HEK293 (cell line): ENCODE measurements at regions of chr12 and their contacts with region 1.

Region 1: DNA sequence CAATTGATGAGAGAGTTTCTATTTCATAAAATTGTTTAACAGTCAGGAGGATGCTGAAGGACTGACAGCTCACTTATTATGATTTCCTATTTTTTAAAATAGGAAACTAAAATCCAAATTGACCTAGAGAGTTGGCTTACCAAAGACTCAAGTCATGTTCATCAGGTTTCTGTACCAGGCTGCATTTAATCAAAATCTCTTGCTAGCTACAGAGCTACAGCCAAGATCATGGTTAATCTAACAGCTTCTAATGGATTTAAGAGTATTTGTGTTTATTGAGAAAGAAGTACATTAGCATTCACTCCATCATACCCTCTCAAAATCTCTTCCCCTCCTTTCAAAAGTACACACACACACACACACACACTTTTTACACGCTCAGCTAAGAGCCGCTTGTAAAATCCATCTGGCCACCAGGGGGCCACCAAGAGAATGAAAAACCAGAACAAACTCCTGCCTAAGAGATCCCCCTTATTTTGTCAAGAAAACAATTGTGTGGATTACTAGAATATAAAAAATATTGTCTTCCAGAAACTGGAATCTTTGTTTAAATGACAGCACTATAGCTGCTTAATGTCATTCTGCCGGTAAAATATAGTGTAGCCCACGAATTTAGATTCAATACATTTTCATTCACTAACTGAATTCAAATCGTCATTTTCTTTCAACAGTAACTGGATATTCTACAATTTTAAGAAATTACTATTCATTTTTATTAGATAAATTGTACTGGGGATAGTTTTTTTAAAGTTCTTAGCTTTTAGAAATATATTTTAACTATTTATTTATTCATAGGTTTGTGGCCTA is 334.0 kb downstream of the BTG1 start:
- H3K4me3 ChIP-seq: no peak overlapping the region
- H3K27ac ChIP-seq: no peak overlapping the region
- H3K4me1 ChIP-seq: no peaks in the 10 kb centered on the region
- CTCF ChIP-seq: peak; percentile 64

Region 2: GRCh38 chr12:91422801-91423688 is 388.6 kb before region 1 on chr12:
- CTCF ChIA-PET with region 1: no interaction called
- POLR2A ChIA-PET with region 1: no interaction called
- H3K4me3 ChIP-seq: no peak overlapping the region
- H3K27ac ChIP-seq: no peak overlapping the region
- H3K4me1 ChIP-seq: 0 out of 2 replicates have a peak, but pooled peaks cover 2% of the 10 kb centered on the region
- CTCF ChIP-seq: no peak

Region 3: GRCh38 chr12:91746976-91747375 is 64.7 kb before region 1 on chr12:
- CTCF ChIA-PET with region 1: interaction called, 10 read pairs
- POLR2A ChIA-PET with region 1: no interaction called
- H3K4me3 ChIP-seq: no peak overlapping the region
- H3K27ac ChIP-seq: no peak overlapping the region
- H3K4me1 ChIP-seq: no peaks in the 10 kb centered on the region
- CTCF ChIP-seq: no peak

Region 4: GRCh38 chr12:91801048-91801447 is 10.6 kb before region 1 on chr12:
- CTCF ChIA-PET with region 1: interaction called, 10 read pairs
- POLR2A ChIA-PET with region 1: interaction called, 3 read pairs
- H3K4me3 ChIP-seq: no peak overlapping the region
- H3K27ac ChIP-seq: no peak overlapping the region
- H3K4me1 ChIP-seq: no peaks in the 10 kb centered on the region
- CTCF ChIP-seq: no peak

Region 5: DNA sequence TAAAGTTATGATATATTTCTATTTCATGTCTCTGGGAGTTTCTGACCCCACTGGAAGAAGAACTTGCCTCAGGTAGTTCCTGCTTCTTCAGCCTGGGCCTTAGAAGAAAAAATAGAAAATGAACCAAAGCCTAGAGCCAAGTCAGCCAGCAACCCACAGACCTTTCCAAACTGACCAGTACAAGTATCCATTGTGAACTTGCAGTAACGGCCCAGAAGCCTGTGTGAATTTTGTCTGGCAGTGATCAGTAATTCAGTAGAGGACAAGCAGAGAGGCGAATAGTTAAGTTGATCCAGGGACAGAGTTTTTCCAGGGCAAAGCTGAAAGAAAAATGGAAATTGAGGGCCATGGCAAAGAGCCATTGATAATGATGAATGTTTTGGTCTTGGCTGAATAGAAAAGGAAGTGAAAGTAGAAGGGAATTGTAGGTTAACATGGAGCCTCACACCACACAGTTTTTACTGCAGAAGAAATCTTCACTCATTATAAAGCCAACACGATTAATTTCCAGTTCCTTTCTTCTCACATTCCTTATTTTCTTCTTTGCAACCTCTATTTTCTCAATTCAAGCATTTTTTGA is 22.2 kb after region 1 on chr12:
- CTCF ChIA-PET with region 1: interaction called, 15 read pairs
- POLR2A ChIA-PET with region 1: no interaction called
- H3K4me3 ChIP-seq: no peak overlapping the region
- H3K27ac ChIP-seq: no peak overlapping the region
- H3K4me1 ChIP-seq: no peaks in the 10 kb centered on the region
- CTCF ChIP-seq: no peak

Region 6: GRCh38 chr12:91931111-91931510 is 119.4 kb after region 1 on chr12:
- CTCF ChIA-PET with region 1: no interaction called
- POLR2A ChIA-PET with region 1: no interaction called
- H3K4me3 ChIP-seq: no peak overlapping the region
- H3K27ac ChIP-seq: no peak overlapping the region
- H3K4me1 ChIP-seq: peaks cover 5% of the 10 kb centered on the region; the same call in 1 of the 2 replicates
- CTCF ChIP-seq: no peak

Region 7: DNA sequence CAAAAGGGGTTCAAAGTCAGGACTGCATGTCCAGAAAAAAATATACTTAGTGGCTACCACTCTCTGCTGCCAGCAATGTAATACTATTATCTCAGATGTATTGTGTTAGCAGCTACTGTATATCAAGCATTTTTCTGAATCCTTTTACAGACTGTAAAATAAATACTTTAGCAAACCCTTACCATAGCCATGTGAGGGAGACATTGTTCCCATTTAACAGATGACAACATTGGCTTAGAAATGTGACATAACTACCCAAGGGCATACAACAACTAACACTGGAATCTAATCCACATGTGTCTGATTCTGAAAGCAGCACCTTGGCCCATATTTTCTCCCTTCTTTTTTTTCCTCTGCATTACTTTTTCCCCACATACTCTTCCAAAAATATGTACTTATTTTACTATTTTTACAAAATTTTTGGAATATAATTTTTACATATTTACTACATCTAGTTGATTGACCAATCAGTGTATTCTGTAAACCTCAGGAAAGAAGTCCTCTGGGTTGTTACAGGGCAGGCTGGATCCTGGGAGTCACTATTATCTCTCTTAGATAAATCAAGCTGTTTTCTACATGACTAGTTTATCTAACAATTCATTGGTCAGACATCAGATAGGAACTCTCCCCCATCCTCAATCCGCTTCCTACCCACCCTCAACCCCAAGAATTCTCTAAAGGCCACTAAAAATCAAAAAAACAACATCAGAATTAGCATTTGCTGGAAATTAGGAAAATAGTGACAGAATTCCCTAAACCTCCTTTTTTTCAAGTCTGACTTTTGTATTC is 179.9 kb after region 1 on chr12:
- CTCF ChIA-PET with region 1: no interaction called
- POLR2A ChIA-PET with region 1: no interaction called
- H3K4me3 ChIP-seq: no peak overlapping the region
- H3K27ac ChIP-seq: no peak overlapping the region
- H3K4me1 ChIP-seq: no peaks in the 10 kb centered on the region
- CTCF ChIP-seq: no peak